ENCODE measurements at regions of chr14 and their contacts with region 1.

Region 1: GRCh38 chr14:91418387-91419043 is 895 bp upstream of the CCDC88C start:
- DNase-seq: peak; percentile 82
- H3K4me3 ChIP-seq: peak overlapping the region; percentile 89
- H3K27ac ChIP-seq: peak overlapping the region; percentile 87
- H3K4me1 ChIP-seq: peaks cover 32% of the 10 kb centered on the region
- CTCF ChIP-seq: peak; percentile 99

Region 2: DNA sequence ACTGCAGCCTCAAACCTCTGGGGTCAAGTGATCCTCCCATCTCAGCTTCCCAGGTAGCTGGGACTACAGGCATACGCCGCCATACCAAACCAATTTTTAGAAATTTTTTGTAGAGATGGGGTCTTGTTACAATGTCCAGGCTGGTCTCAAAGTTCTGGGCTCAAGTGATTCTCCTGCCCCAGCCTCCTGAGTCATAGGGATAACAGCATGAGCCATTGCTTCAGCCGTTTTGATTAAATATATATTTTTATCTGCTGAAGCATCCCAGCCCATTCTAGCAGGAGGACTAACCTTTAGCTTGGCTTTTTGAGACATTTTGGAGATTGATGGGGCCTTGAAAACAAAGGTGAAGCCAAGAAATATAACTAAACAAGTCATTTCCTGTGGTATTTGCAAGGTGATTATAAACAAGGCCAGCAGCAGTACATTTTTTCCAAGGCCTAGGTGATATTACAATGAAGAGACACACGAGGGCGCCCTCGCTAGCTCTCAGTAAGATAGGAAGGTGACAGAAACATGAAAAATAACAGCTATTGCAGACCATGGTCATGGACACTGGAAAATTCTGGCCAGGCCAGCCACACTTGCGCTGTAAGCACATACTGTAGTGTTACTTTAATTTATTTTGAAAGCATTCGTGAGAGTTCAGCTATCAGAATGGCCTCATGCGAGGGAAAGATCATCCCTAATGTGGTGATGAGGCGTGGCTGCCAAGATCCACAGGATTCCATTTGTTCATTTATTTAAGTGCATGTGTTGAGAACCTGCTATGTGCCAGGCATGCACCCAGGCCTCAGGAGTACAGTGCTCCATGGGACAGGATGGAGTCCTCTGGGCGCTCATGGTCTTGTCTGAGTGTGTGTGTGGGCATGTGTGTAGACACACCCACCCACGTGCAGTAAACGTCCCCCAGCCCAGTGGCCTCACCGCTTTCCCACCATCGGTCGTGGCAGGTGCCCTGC is 241.2 kb before region 1 on chr14:
- CTCF ChIA-PET with region 1: interaction called, 3 read pairs
- POLR2A ChIA-PET with region 1: interaction called, 3 read pairs
- intact Hi-C with region 1: loop called (anchors 1 kb)
- DNase-seq: peak; percentile 82
- H3K4me3 ChIP-seq: no peak overlapping the region
- H3K27ac ChIP-seq: peak overlapping the region; percentile 42
- H3K4me1 ChIP-seq: peaks cover 10% of the 10 kb centered on the region
- CTCF ChIP-seq: peak; percentile 98

Region 3: GRCh38 chr14:91323671-91324605 is 94.6 kb before region 1 on chr14:
- CTCF ChIA-PET with region 1: interaction called, 15 read pairs
- POLR2A ChIA-PET with region 1: interaction called, 7 read pairs
- intact Hi-C with region 1: loop called (anchors 1 kb)
- DNase-seq: peak; percentile 88
- H3K4me3 ChIP-seq: peak overlapping the region; percentile 53
- H3K27ac ChIP-seq: peak overlapping the region; percentile 92
- H3K4me1 ChIP-seq: peaks cover 58% of the 10 kb centered on the region
- CTCF ChIP-seq: peak; percentile 100

Region 4: GRCh38 chr14:91367173-91368171 is 51.0 kb before region 1 on chr14:
- CTCF ChIA-PET with region 1: no interaction called
- POLR2A ChIA-PET with region 1: interaction called, 10 read pairs
- intact Hi-C with region 1: loop called (anchors 2 kb)
- DNase-seq: peak; percentile 94
- H3K4me3 ChIP-seq: peak overlapping the region; percentile 53
- H3K27ac ChIP-seq: peak overlapping the region; percentile 94
- H3K4me1 ChIP-seq: peaks cover 100% of the 10 kb centered on the region
- CTCF ChIP-seq: no peak

Region 5: GRCh38 chr14:91388551-91388975 is 30.0 kb before region 1 on chr14:
- CTCF ChIA-PET with region 1: interaction called, 4 read pairs
- POLR2A ChIA-PET with region 1: interaction called, 10 read pairs
- intact Hi-C with region 1: no loop called
- DNase-seq: no peak
- H3K4me3 ChIP-seq: no peak overlapping the region
- H3K27ac ChIP-seq: peak overlapping the region; percentile 49
- H3K4me1 ChIP-seq: peaks cover 96% of the 10 kb centered on the region
- CTCF ChIP-seq: no peak